Stomach (tissue), 19 donors: ENCODE measurements at regions of chr1 and their contacts with region 1.

Region 1: GRCh38 chr1:27662707-27663393 is 9.1 kb downstream of the IFI6 start:
- DNase-seq: peak; percentile 90 to 94
- H3K4me3 ChIP-seq: no peak overlapping the region
- H3K27ac ChIP-seq: peak overlapping the region; percentile 8 to 78 (median 69)
- H3K4me1 ChIP-seq: peaks cover 11 to 34% (median 27%) of the 10 kb centered on the region in 4 donors
- H3K27me3 ChIP-seq: no peaks in the 10 kb centered on the region
- CTCF ChIP-seq: peak in 6 of 7 experiments; percentile 78 to 97 (median 89)
- EP300 ChIP-seq: no peak
- POLR2A ChIP-seq: no peak

Region 2: DNA sequence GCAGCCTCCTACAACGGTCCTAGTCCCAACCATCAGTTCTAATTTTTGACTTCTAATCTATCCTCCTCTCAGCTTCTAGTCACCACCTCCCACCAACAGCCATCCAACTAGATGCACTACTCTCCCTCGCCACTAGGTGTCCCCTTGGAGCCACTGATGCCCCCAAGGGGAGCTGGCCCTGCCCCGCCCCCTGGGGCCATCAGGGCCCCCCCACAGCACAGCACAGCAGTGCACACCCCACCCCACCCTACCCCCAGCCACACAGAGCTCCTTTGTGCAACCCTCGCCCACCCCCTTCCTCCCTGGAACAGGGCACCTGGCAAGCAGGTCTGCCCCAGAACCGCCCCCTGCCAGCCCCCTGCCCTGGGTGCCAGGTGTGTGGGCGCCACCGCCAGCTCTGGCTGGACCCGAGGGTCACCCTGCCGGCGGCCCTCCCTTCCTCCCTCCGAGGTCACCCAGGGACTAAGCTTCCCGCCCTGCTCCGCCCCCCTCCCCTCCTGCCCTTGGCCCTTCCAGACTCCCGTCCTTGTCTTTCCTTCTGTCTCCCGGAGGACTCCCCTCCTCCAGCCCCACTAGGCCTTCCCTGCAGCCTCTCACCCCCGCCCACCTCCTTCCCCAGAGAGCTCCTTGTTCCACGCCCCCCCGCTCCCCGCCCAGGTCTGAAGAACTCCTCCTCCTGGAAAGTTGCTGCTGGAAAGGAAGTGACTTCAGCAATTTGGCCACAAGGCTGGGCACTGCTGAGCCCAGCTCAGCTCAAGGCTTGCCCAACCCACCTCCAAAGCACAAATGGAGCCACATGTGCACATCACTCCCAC is 105.9 kb before region 1 on chr1:
- intact Hi-C with region 1: no loop called
- DNase-seq: peak; percentile 89 to 96
- H3K4me3 ChIP-seq: peak overlapping the region; percentile 8 to 27 (median 18)
- H3K27ac ChIP-seq: peak overlapping the region; percentile 80 to 97 (median 87)
- H3K4me1 ChIP-seq: peaks cover 63 to 91% (median 72%) of the 10 kb centered on the region in 4 donors
- H3K27me3 ChIP-seq: no peaks in the 10 kb centered on the region
- CTCF ChIP-seq: peak in 5 of 7 experiments; percentile 90 to 97 (median 93)
- EP300 ChIP-seq: no peak
- POLR2A ChIP-seq: no peak

Region 3: DNA sequence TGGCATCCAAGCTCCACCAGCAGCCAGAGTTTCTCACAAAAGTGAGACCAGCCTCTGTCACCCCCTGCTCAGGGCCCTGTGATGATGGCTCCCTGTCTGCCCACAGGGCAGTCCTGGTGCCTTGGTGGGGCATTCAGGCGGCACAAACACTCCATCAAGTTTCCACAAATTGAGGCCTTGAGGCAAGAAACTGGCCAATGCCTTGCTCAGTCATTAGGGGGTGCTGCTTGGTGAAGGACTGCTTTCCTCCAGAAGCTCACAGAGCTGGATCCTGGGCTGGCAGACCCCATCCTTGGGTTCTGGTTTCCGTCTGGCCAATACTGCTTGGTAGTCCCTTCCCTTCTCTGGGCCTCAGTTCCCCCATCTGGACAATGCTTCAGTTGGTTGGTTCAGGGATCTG is 46.4 kb before region 1 on chr1:
- intact Hi-C with region 1: loop called (anchors 5 kb)
- DNase-seq: peak in 1 of 2 donors; percentile 16
- H3K4me3 ChIP-seq: no peak overlapping the region
- H3K27ac ChIP-seq: no peak overlapping the region
- H3K4me1 ChIP-seq: peaks cover 0 to 32% (median 5%) of the 10 kb centered on the region in 4 donors
- H3K27me3 ChIP-seq: no peaks in the 10 kb centered on the region
- CTCF ChIP-seq: no peak
- EP300 ChIP-seq: no peak
- POLR2A ChIP-seq: no peak

Region 4: GRCh38 chr1:27725374-27726173 is 62.7 kb after region 1 on chr1 and contains the start of gene FAM76A:
- intact Hi-C with region 1: loop called (anchors 10 kb)
- DNase-seq: peak; percentile 100
- H3K4me3 ChIP-seq: peak within 1 kb of the TSS; percentile 67 to 98 (median 88)
- H3K27ac ChIP-seq: peak within 1 kb of the TSS; percentile 88 to 98 (median 93)
- H3K4me1 ChIP-seq: peaks cover 15 to 40% (median 22%) of the 10 kb centered on the region in 4 donors
- H3K27me3 ChIP-seq: no peaks in the 10 kb centered on the region
- CTCF ChIP-seq: peak in 4 of 7 experiments; percentile 15 to 59 (median 30)
- EP300 ChIP-seq: no peak
- POLR2A ChIP-seq: no peak
- total RNA-seq, gene FAM76A: 11.2 to 125 (median 18.5) TPM